ENCODE measurements at regions of chr4 and their contacts with region 1.

Region 1: DNA sequence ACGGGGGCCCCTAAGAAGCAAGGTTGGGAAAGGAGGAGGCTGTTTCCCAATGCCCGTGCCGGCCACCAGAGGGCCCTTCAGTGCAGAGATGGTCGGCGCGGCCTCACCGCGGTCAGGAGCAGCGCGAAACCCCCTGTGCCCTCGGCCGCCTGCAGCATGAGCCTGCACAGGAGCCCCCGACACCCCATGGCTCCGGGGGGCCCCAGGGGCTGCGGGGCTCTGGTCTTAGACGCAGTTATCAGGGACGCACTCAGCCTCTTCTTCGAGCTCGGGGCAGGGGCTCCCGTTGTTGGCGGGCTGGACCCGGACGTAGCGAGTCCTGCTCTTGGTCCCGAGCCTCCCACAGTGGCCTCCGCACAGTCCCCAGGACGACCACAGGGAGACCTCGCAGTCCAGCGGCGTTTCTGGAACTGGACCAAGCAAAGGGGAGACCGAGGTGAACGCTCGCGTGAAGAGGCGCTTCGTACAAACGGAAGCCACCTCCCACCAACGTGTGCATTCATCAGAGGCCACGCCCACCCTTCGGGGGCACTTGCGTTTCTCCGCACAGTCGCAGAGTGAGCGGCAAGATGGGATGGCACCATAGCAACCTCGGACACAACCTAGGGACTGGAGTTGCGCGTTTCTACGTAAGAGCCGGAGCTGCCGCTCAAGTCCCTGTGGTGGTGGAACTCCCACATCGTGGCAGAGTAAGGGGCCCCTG is 5.0 kb downstream of the SPON2 start:
- DNase-seq: peak; percentile 82 to 93 (median 92)
- ATAC-seq: peak; percentile 84 to 87
- H3K4me3 ChIP-seq: peak overlapping the region; percentile 27
- H3K27ac ChIP-seq: no peak overlapping the region
- H3K4me1 ChIP-seq: no peaks in the 10 kb centered on the region
- H3K27me3 ChIP-seq: no peaks in the 10 kb centered on the region

Region 2: GRCh38 chr4:825238-825835 is 342.1 kb before region 1 on chr4:
- intact Hi-C with region 1: no loop called
- DNase-seq: peak in 1 of 3 donors; percentile 65
- ATAC-seq: peak; percentile 25 to 26
- H3K4me3 ChIP-seq: peak overlapping the region; percentile 62
- H3K27ac ChIP-seq: no peak overlapping the region
- H3K4me1 ChIP-seq: peaks cover 2% of the 10 kb centered on the region
- H3K27me3 ChIP-seq: no peaks in the 10 kb centered on the region

Region 3: DNA sequence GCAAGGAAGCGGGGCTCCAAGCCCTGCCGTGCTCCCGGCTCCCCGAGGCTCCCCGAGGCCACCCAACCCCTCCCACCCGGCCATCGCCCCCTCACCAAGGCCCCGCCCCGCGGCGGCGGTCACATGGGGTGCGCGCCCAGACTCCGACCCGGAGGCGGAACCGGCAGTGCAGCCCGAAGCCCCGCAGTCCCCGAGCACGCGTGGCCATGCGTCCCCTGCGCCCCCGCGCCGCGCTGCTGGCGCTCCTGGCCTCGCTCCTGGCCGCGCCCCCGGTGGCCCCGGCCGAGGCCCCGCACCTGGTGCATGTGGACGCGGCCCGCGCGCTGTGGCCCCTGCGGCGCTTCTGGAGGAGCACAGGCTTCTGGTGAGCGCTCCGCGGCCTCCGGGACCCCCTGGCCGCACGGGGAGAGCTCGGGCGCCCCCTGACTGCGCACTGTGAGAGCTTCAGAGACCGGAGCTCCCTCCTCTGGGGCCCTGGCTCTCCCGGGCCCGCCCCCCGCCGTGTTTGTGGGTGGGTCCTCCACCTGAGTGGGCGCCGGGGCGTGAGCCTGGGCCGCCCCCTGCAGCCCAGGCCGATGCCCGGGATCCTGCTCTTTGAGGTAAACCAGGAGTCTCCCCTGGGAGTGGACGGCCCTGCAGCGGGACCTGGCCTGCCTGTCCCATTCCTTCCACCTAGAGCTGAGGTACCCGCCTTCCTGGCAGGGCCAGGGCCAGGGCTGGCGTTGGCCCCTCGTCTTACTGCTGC is 180.3 kb before region 1 on chr4 and contains the start of gene IDUA:
- intact Hi-C with region 1: no loop called
- DNase-seq: peak; percentile 82 to 94 (median 94)
- ATAC-seq: peak; percentile 87 to 90
- H3K4me3 ChIP-seq: peak within 1 kb of the TSS; percentile 74
- H3K27ac ChIP-seq: no peak within 1 kb of the TSS
- H3K4me1 ChIP-seq: no peaks in the 10 kb centered on the region
- H3K27me3 ChIP-seq: no peaks in the 10 kb centered on the region
- total RNA-seq, gene IDUA: 14.7 to 17.4 (median 17.1) TPM

Region 4: DNA sequence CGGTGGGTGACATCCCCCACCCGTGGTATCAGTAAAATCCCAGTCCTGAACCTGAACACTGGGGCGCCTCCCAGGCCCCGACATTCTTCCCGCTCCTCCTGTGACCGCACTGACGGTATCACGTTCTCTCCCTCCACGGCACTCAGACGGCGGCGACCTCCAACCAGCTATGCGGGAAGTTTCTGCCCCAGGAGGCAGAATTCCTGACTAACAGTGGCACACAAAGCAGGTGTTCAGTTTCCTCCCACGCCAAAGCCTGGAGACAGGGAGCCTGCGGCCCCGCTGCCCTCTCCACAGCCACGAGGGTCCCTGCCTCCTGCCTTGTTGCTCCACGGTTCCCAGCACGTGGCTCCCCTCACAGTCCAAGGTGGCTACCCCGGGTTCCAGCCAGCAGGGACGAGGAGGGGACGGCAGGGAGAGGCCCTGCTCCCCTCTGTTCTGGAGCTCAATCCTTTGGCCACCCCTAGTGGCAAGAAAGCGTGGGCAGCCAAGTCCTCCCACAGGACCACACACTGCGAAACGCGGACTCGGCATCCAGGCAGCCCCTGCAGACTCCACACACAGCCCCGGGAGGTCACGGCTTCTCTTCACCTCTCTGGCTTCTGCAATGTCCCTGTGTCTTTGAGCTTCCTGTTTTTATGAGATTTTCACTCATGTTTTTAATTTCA is 66.4 kb after region 1 on chr4:
- intact Hi-C with region 1: loop called in 2 of 4 experiments (anchors 5 to 10 kb)
- DNase-seq: peak; percentile 61 to 85 (median 76)
- ATAC-seq: peak; percentile 61 to 66
- H3K4me3 ChIP-seq: no peak overlapping the region
- H3K27ac ChIP-seq: peak overlapping the region; percentile 19
- H3K4me1 ChIP-seq: peaks cover 3% of the 10 kb centered on the region
- H3K27me3 ChIP-seq: no peaks in the 10 kb centered on the region

Region 5: GRCh38 chr4:1249148-1249730 is 81.8 kb after region 1 on chr4:
- intact Hi-C with region 1: loop called in 3 of 4 experiments (anchors 5 to 10 kb)
- DNase-seq: peak; percentile 89 to 96 (median 95)
- ATAC-seq: peak; percentile 63 to 73
- H3K4me3 ChIP-seq: peak overlapping the region; percentile 93
- H3K27ac ChIP-seq: peak overlapping the region; percentile 88
- H3K4me1 ChIP-seq: peaks cover 21% of the 10 kb centered on the region
- H3K27me3 ChIP-seq: no peaks in the 10 kb centered on the region

Region 6: GRCh38 chr4:1266881-1267763 is 99.7 kb after region 1 on chr4:
- intact Hi-C with region 1: loop called in 1 of 4 experiments (anchors 5 kb)
- DNase-seq: no peak
- ATAC-seq: no peak
- H3K4me3 ChIP-seq: no peak overlapping the region
- H3K27ac ChIP-seq: no peak overlapping the region
- H3K4me1 ChIP-seq: no peaks in the 10 kb centered on the region
- H3K27me3 ChIP-seq: no peaks in the 10 kb centered on the region

Region 7: GRCh38 chr4:1337376-1337860 is 170.0 kb after region 1 on chr4:
- intact Hi-C with region 1: loop called in 2 of 4 experiments (anchors 10 kb)
- DNase-seq: peak; percentile 10 to 42 (median 26)
- ATAC-seq: no peak
- H3K4me3 ChIP-seq: no peak overlapping the region
- H3K27ac ChIP-seq: no peak overlapping the region
- H3K4me1 ChIP-seq: no peaks in the 10 kb centered on the region
- H3K27me3 ChIP-seq: no peaks in the 10 kb centered on the region

Measured in right cardiac atrium (tissue), 5 donors.